ENCODE measurements at regions of chr5 and their contacts with region 1.

Region 1: DNA sequence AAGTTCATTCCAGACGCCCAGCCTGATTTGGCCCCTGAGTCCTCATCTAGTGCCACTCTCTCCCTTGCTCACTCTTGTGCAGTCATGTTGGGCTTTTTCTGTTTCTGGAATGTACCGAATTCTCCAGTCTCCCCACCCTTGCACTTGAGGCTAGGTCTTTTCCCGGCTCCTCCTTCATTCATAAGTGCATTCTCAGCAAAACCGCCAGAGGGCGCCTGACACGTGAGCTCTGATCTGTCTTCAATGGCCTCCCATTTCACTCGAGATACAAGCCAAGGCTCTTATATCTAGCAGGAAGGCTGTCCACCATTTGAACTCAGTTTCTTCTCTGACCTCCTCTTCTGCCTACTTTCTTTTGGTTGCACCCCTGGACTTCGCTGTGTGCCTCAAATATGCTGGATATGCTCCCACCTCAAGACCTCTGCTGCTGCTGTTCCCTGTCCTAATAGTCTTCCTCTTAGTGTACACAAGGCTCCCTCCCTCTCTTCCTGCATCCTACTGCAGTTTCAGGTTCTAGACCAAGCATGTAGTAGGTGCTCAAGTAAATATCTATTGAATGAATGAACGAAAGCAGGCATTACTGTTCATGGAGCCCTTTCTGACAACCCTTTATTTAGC is 568.1 kb upstream of the WWC1 start:
- DNase-seq: peak; percentile 64 to 89 (median 74)
- H3K4me3 ChIP-seq: no peak overlapping the region
- H3K27ac ChIP-seq: no peak overlapping the region
- H3K4me1 ChIP-seq: no peaks in the 10 kb centered on the region
- H3K27me3 ChIP-seq: peaks cover 4% of the 10 kb centered on the region
- CTCF ChIP-seq: peak; percentile 77 to 91 (median 85)
- POLR2A ChIP-seq: no peak

Region 2: GRCh38 chr5:168020542-168021294 is 297.4 kb after region 1 on chr5:
- intact Hi-C with region 1: loop called in 1 of 2 experiments (anchors 10 kb)
- DNase-seq: peak in 2 of 7 donors; percentile 10 to 20
- H3K4me3 ChIP-seq: no peak overlapping the region
- H3K27ac ChIP-seq: no peak overlapping the region
- H3K4me1 ChIP-seq: no peaks in the 10 kb centered on the region
- H3K27me3 ChIP-seq: no peaks in the 10 kb centered on the region
- CTCF ChIP-seq: peak in 4 of 6 experiments; percentile 3 to 29 (median 22)
- POLR2A ChIP-seq: no peak

Region 3: GRCh38 chr5:168219515-168220410 is 496.4 kb after region 1 on chr5:
- intact Hi-C with region 1: loop called (anchors 5 to 10 kb)
- DNase-seq: peak; percentile 42 to 83 (median 58)
- H3K4me3 ChIP-seq: no peak overlapping the region
- H3K27ac ChIP-seq: no peak overlapping the region
- H3K4me1 ChIP-seq: peaks cover 0 to 5% of the 10 kb centered on the region in 2 donors
- H3K27me3 ChIP-seq: no peaks in the 10 kb centered on the region
- CTCF ChIP-seq: peak; percentile 81 to 92 (median 86)
- POLR2A ChIP-seq: no peak

Measured in adrenal gland (tissue), 19 donors.